Prostate gland (tissue), 2 donors: ENCODE measurements at regions of chr6 and their contacts with region 1.

Region 1: DNA sequence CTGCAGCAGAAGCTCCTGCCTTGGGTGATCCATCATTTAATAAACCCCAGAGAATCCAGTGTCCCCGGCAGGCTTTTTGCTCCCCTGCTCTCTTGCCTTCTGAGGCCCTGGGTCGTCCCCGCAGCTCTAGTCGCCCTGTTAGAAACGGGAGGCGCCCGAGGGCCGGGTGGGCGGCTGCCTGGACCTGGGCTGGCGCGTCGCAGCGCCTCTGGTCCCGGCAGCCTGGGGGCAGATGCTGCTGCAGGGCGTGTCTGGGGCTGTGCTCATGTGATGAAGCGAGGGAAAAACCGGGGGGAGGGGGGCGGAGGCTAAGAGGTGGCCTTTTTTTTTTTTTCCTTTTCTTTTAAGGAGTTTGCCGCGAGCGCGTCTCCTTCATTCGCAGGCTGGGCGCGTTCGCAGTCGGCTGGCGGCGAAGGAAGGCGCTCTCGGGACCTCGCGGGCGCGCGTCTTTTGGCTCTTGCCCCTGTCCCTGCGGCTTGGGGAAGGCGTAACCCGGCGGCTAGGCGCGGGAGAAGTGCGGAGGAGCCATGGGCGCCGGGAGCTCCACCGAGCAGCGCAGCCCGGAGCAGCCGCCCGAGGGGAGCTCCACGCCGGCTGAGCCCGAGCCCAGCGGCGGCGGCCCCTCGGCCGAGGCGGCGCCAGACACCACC is 394 bp downstream of the AKAP12 start:
- DNase-seq: peak; percentile 39
- H3K4me3 ChIP-seq: peak overlapping the region; percentile 55 to 59
- H3K27ac ChIP-seq: peak overlapping the region; percentile 79 to 80
- H3K4me1 ChIP-seq: peaks cover 3% of the 10 kb centered on the region
- H3K27me3 ChIP-seq: no peaks in the 10 kb centered on the region
- CTCF ChIP-seq: no peak
- POLR2A ChIP-seq: peak; percentile 14

Region 2: DNA sequence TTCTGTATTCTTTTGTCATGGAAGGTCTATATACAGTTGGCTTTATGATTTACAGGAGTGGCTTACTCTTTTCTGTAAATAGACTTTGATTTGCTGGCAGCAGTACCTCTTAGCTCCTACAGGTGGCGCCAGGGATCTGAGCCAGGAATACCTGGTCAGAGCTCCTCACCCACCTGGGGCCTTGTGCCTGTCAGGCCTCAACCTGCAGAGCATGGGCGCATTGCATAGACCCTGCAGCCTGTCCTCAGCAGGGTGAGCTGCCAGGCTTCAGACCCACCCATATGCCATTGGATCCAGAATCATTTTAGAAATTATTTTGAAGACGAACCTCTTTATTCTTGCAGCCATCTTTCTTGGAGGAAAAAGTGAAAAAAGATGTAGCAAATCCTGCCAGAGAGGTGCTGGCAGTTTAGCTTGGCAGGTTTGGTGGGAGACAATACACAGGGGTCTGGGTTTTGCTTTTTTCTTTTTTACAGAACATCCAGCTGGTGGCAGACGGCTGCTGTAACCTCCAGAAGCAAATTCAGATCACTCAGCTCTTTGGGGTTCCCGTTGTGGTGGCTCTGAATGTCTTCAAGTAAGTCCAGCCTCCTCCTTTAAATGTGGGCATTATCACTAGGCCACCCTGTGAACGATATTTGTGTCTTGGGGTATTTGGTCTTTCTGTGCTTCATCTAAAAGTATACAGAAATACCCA is 225.6 kb before region 1 on chr6:
- intact Hi-C with region 1: loop called (anchors 5 kb)
- DNase-seq: peak; percentile 74
- H3K4me3 ChIP-seq: no peak overlapping the region
- H3K27ac ChIP-seq: no peak overlapping the region
- H3K4me1 ChIP-seq: no peaks in the 10 kb centered on the region
- H3K27me3 ChIP-seq: no peaks in the 10 kb centered on the region
- CTCF ChIP-seq: peak; percentile 97 to 98 (median 97)
- POLR2A ChIP-seq: no peak

Region 3: DNA sequence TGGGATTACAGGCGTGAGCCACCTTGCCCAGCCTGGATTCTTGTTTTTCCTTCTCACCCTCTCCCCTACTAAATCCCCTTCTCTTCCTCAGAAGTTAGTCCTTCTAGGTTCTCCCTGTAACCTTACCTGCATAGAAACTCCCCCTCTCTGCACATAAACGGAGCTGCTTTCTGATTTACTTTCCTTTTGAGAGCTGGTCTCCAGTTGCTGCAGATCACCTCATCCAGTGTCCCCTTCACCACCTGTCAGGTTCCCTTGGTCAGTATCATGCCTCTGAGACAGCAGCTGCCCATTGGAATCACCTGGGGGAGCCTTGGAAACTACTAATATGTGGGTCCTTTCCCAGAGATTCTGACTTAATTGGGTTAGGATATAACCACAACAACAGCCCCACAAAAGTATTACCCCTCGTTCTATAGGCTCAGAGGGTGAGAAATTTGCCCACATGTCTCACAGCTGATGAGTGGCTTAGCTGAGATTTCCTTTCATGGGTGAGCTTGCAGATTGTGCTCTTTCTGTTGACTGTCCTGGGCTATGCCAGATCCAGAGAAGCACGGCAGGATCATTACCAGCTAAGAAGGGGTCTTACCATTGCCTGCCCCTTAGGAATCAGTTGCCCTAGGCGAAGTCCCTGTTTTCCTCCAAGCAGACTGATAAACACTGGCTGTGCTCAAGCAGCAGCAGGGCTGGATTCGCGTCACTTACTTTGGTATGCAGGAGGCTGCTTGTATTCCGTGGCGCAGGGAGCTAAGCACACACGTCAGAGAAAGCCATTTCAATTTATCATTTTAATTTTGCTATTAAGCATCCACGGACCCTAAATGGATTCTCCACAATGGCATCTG is 50.9 kb after region 1 on chr6:
- intact Hi-C with region 1: loop called (anchors 10 kb)
- DNase-seq: no peak
- H3K4me3 ChIP-seq: no peak overlapping the region
- H3K27ac ChIP-seq: peak overlapping the region in 1 of 2 donors; percentile 31
- H3K4me1 ChIP-seq: no peaks in the 10 kb centered on the region
- H3K27me3 ChIP-seq: no peaks in the 10 kb centered on the region
- CTCF ChIP-seq: no peak
- POLR2A ChIP-seq: no peak

Region 4: DNA sequence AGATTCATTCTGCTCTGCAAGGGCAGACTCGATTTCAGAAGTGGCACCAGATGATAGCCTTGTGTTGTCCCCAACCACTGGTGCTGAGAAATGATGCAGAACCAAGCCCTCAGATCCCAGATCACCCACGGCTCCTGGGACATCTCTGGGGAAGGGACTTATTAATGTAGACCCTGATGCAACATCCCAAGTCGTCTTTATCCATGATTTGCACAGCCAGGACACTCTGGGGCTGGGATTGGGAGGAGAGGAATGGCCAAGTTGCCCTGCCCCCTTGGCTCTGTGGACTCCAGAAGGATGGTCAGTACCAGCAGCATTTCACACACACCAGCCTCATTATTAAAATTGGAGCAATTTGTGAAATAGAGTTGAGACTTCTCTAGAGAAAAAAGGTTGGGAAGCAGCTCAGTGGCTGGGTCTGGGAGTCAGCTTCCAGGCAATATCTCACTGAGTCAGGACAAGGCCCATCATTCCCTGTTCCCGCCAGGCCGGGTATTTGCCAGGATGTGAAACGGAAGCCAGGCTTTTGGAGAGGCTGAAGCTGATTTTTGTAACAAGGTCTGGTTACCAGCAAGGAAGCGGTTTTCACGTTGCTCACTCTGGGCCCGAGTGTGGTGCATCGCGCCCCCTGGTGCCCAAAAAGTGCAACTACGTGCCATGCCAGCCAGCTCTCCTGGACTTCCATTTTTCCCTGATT is 83.8 kb after region 1 on chr6:
- intact Hi-C with region 1: loop called (anchors 1 kb)
- DNase-seq: peak; percentile 61
- H3K4me3 ChIP-seq: no peak overlapping the region
- H3K27ac ChIP-seq: no peak overlapping the region
- H3K4me1 ChIP-seq: peaks cover 17% of the 10 kb centered on the region
- H3K27me3 ChIP-seq: no peaks in the 10 kb centered on the region
- CTCF ChIP-seq: peak; percentile 94 to 97 (median 96)
- POLR2A ChIP-seq: no peak